ENCODE measurements at regions of chr9 and their contacts with region 1.

Region 1: DNA sequence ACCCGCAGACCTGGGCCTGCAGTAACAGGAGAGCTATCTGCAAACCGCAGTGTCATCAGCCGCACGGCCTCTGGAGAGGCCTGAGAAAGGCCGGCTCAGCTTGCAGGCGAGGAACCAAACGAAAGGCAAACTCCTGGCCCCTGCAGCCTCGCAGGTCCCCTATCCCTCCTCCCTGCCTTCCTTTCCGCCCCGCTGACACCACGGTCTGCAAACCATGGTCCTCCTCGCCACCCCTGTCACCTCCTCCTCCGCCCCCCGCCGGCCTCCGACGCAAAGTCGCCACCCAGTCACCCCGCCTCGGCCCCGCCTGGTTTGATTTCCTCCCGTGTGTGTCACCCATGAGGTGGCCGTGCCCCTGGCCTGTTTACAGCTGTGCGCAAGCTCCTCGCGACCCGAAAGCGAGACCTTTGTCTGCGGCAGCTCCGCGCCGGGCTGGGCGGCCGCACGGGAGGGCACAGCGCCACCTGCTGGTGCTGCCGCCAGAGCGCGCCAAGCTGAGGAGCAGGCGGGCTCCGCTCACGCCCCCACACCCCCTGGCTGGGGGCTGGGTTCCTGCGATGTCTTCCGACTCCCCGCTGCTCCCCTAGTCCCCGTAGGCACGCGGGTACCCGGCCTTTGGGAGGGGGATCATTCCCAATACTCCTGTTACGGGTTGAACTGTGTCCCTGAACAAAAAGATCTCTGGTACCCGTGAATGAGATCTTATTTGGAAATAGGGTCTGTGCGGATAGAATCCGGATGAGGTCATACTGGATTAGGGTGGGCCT is 19.4 kb downstream of the GBGT1 start:
- DNase-seq: peak; percentile 80 to 96 (median 86)
- H3K4me3 ChIP-seq: peak overlapping the region in 1 of 3 donors; percentile 49
- H3K27ac ChIP-seq: peak overlapping the region in 1 of 2 donors; percentile 7
- H3K4me1 ChIP-seq: peaks cover 0 to 30% (median 15%) of the 10 kb centered on the region in 3 donors
- H3K27me3 ChIP-seq: no peaks in the 10 kb centered on the region
- CTCF ChIP-seq: peak; percentile 98

Region 2: DNA sequence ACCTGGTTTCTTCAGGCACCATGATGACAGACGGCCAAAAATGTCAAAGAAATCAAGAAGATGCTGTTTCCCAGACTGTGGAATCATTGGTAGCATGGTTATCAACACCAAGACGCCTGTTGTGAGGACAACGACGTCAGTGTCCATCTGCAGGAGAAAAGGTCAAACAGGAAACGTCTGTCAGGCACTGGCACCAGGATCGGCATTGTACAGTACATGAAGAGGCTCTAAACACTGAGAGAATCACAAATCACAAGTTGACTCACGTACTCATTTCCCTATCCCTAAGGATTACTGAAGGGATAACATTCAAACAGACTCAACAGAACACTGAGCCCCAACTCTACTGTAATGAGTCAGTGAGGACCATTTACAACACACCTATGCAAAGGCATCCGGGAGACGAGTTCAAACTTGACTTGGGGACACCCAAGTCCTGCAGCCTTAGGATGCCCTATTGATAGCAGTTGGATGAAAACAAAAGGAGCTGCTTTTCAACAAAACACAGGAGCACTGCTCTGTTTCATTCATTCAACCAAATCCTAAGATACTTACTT is 220.9 kb before region 1 on chr9:
- intact Hi-C with region 1: no loop called
- DNase-seq: no peak
- H3K4me3 ChIP-seq: no peak overlapping the region
- H3K27ac ChIP-seq: no peak overlapping the region
- H3K4me1 ChIP-seq: no peaks in the 10 kb centered on the region
- H3K27me3 ChIP-seq: no peaks in the 10 kb centered on the region
- CTCF ChIP-seq: no peak

Region 3: DNA sequence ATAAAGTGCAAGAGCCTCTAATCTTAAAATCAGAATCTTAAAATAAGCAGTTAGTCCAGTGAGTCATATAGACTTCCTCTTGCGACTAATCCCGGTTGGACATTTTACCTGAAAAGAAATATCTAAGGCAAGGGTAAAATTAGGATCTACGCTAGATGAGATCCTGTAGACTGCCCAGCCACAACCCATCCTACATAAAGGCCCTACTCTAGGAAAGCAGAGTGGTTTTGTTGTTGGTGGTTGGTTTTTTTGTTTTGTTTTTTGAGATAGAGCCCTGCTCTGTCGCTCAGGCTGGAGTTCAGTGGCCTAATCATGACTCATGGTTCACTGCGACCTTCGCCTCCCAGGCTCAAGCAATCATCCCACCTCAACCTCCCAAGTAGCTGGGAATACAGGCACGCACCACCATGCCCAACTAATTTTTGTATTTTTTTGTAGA is 206.8 kb before region 1 on chr9:
- intact Hi-C with region 1: no loop called
- DNase-seq: no peak
- H3K4me3 ChIP-seq: no peak overlapping the region
- H3K27ac ChIP-seq: peak overlapping the region in 1 of 2 donors; percentile 38
- H3K4me1 ChIP-seq: peaks cover 2 to 5% (median 3%) of the 10 kb centered on the region in 3 donors
- H3K27me3 ChIP-seq: no peaks in the 10 kb centered on the region
- CTCF ChIP-seq: no peak

Region 4: GRCh38 chr9:133103183-133103986 is 40.9 kb before region 1 on chr9:
- intact Hi-C with region 1: loop called (anchors 5 kb)
- DNase-seq: peak in 4 of 5 donors; percentile 56 to 85 (median 75)
- H3K4me3 ChIP-seq: no peak overlapping the region
- H3K27ac ChIP-seq: no peak overlapping the region
- H3K4me1 ChIP-seq: no peaks in the 10 kb centered on the region
- H3K27me3 ChIP-seq: no peaks in the 10 kb centered on the region
- CTCF ChIP-seq: peak; percentile 96

Measured in kidney (tissue), 22 donors.